Endothelial cell of umbilical vein (primary cell): ENCODE measurements at regions of chr20 and their contacts with region 1.

Region 1: DNA sequence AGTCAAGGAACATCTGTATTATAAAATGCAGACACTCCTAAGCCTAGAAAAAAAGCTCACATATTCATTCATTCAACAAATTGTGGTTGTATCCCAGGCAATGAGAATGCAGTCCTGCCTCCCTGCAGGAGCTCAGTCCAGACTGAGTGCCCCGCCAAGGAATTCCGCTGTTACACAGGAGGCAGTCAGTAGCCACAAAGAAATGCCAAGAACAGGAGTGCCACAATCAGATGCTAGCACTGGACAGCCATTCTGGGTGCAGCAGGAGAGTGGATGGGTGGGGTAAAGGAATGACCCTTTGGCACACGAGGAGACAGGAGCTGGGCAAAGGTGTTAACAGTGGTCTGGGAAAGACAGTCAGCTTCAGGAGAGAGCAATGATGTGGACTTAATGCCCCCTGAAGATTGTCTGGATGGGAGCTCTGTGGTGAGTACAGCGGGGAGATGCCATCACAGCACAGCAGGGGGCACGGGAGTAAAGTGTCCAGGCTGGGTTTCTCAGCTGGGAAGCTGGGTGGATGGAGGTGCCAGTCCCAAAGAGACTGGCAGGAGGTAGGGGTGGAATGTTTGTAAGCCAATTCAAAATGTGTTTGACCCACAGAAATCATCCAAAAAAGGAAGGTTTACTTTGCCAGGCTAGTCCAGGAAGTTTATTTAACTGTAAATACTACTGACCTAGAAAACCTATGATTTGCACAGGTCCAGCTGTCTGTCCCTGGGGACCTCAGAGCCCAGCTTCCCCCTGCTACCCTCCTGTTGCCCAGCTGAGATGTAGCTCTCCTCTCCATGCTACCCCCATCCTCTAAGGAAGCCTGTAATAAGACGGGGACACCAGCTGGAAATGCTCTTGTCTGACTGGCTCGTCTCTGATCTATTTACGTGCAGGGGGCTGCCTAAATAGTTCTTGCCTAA is 84.1 kb downstream of the SLC23A2 start:
- DNase-seq: no peak
- H3K4me3 ChIP-seq: no peak overlapping the region
- H3K27ac ChIP-seq: no peak overlapping the region
- H3K4me1 ChIP-seq: peaks cover 3% of the 10 kb centered on the region
- H3K27me3 ChIP-seq: no peaks in the 10 kb centered on the region
- CTCF ChIP-seq: peak in 1 of 2 donors; percentile 14
- POLR2A ChIP-seq: no peak

Region 2: GRCh38 chr20:4585104-4585753 is 332.0 kb before region 1 on chr20:
- CTCF ChIA-PET with region 1: no interaction called
- POLR2A ChIA-PET with region 1: no interaction called
- dilution Hi-C with region 1: no loop called
- intact Hi-C with region 1: no loop called
- DNase-seq: no peak
- H3K4me3 ChIP-seq: no peak overlapping the region
- H3K27ac ChIP-seq: no peak overlapping the region
- H3K4me1 ChIP-seq: no peaks in the 10 kb centered on the region
- H3K27me3 ChIP-seq: peaks cover 2 to 4% of the 10 kb centered on the region in 2 experiments
- CTCF ChIP-seq: no peak
- POLR2A ChIP-seq: no peak

Region 3: GRCh38 chr20:4906897-4907296 is 10.3 kb before region 1 on chr20:
- CTCF ChIA-PET with region 1: interaction called, 14 read pairs
- POLR2A ChIA-PET with region 1: no interaction called
- dilution Hi-C with region 1: no loop called
- intact Hi-C with region 1: no loop called
- DNase-seq: no peak
- H3K4me3 ChIP-seq: no peak overlapping the region
- H3K27ac ChIP-seq: no peak overlapping the region
- H3K4me1 ChIP-seq: no peaks in the 10 kb centered on the region
- H3K27me3 ChIP-seq: no peaks in the 10 kb centered on the region
- CTCF ChIP-seq: no peak
- POLR2A ChIP-seq: no peak